MCF 10A (cell line): ENCODE measurements at regions of chr2 and their contacts with region 1.

Region 1: GRCh38 chr2:139790807-139791752 is 1010.9 kb upstream of the NXPH2 start:
- DNase-seq: no peak
- H3K4me3 Mint-ChIP-seq: no peak overlapping the region
- H3K27ac Mint-ChIP-seq: no peak overlapping the region
- H3K4me1 Mint-ChIP-seq: no peaks in the 10 kb centered on the region
- H3K27me3 Mint-ChIP-seq: peaks cover 39% of the 10 kb centered on the region
- CTCF ChIP-seq: no peak

Region 2: GRCh38 chr2:139946693-139947092 is 155.6 kb after region 1 on chr2:
- CTCF ChIA-PET with region 1: no interaction called
- POLR2A ChIA-PET with region 1: no interaction called
- intact Hi-C with region 1: loop called (anchors 2 kb)
- DNase-seq: no peak
- H3K4me3 Mint-ChIP-seq: no peak overlapping the region
- H3K27ac Mint-ChIP-seq: no peak overlapping the region
- H3K4me1 Mint-ChIP-seq: no peaks in the 10 kb centered on the region
- H3K27me3 Mint-ChIP-seq: peaks cover 13% of the 10 kb centered on the region
- CTCF ChIP-seq: no peak